PC-3 (cell line): ENCODE measurements at regions of chr7 and their contacts with region 1.

Region 1: DNA sequence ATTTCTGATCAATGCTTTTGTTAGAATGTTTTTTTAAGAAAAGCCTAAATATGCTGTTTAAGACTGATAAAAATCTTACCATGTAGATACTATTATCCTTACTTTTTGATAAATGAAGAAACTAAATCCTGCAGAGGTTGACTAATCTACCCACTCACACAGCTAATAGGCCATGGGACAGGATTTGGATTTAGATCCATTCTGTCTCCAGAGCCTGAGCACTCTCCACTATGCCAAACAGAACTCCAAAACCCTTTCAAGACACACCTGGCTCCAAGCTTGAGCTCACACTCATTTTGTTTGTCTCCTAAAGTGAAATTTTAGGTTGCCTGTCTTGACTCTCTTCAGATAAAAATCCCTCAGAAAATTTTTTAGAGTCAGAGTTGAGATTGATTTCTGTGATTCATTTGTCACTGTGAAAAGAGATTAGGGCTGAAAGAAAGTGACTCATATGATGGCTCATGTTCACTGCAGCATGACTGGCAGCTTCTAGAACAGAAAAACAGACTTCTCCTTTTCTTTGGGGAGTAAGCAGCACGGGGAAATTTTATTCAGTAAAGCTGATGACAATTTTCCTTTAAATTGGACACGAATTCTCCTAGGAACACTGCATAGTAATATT is 132.3 kb upstream of the POT1 start:
- DNase-seq: peak; percentile 78
- ATAC-seq: peak; percentile 80
- H3K4me3 ChIP-seq: peak overlapping the region; percentile 11; the same call in 1 of the 2 replicates
- H3K27ac ChIP-seq: peak overlapping the region; percentile 77
- H3K4me1 ChIP-seq: peaks cover 16% of the 10 kb centered on the region
- H3K27me3 ChIP-seq: no peaks in the 10 kb centered on the region
- CTCF ChIP-seq: no peak

Region 2: GRCh38 chr7:125136755-125137547 is 75.1 kb after region 1 on chr7:
- CTCF ChIA-PET with region 1: no interaction called
- POLR2A ChIA-PET with region 1: no interaction called
- intact Hi-C with region 1: loop called (anchors 1 kb)
- DNase-seq: peak; percentile 61
- ATAC-seq: peak; percentile 84
- H3K4me3 ChIP-seq: peak overlapping the region; percentile 34
- H3K27ac ChIP-seq: peak overlapping the region; percentile 55
- H3K4me1 ChIP-seq: peaks cover 19% of the 10 kb centered on the region; the same call in 1 of the 2 replicates
- H3K27me3 ChIP-seq: no peaks in the 10 kb centered on the region
- CTCF ChIP-seq: no peak

Region 3: GRCh38 chr7:125316466-125316865 is 254.6 kb after region 1 on chr7:
- CTCF ChIA-PET with region 1: interaction called, 18 read pairs
- POLR2A ChIA-PET with region 1: no interaction called
- intact Hi-C with region 1: loop called (anchors 1 kb)
- DNase-seq: peak; percentile 56
- ATAC-seq: peak; percentile 99
- H3K4me3 ChIP-seq: no peak overlapping the region
- H3K27ac ChIP-seq: no peak overlapping the region
- H3K4me1 ChIP-seq: no peaks in the 10 kb centered on the region
- H3K27me3 ChIP-seq: no peaks in the 10 kb centered on the region
- CTCF ChIP-seq: peak; percentile 48

Region 4: DNA sequence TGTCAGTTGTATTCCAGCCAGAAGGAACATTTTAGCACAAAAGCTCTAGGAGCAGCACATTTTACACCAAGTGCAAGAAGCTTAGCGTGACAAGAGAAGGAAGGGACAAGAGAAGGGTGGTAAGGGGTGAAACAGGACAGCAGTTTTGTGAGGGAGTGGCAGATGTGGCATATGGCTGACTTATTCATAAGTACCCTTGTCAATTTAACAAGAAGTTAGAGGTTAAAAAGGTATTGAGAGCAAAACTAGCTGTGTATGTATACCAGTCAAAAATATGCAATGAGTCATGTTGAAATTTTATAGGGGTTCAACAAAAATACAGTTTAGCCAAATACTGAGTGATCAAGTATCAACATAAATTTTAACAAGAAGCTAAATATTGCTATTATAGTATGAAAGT is 429.2 kb after region 1 on chr7:
- CTCF ChIA-PET with region 1: no interaction called
- POLR2A ChIA-PET with region 1: no interaction called
- intact Hi-C with region 1: loop called (anchors 2 kb)
- DNase-seq: peak; percentile 57
- ATAC-seq: peak; percentile 96
- H3K4me3 ChIP-seq: peak overlapping the region; percentile 31; the same call in 1 of the 2 replicates
- H3K27ac ChIP-seq: peak overlapping the region; percentile 87
- H3K4me1 ChIP-seq: peaks cover 24% of the 10 kb centered on the region
- H3K27me3 ChIP-seq: no peaks in the 10 kb centered on the region
- CTCF ChIP-seq: no peak

Region 5: DNA sequence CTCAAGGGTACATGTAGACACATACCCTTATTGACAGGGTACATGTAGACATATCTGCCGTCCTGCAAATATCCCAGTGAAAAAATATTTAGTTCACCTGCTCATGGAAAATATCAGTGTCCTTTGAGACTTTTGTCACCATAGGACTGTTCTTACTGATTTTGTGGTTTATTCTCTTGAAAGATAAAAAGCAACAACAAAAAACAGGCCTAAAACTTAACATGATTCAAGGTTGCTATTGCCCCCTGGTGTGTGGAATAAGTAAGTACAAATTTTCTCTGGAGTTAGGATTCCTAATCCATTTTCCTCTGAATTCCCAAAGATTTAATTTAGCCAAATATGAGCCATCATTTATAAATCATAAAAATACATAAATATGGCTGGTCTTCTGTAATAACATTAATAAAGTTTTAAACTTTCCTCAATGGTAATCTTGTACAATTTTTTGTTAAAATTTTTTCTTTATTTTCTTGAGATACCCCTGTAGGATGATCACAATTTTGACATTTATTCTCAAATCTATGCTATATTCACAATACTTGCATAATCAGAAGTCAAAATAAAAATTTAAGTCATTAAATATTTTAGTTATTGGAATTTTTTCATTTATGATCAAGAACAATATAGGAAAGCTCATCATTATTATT is 609.2 kb after region 1 on chr7:
- CTCF ChIA-PET with region 1: no interaction called
- POLR2A ChIA-PET with region 1: no interaction called
- intact Hi-C with region 1: loop called (anchors 1 kb)
- DNase-seq: peak; percentile 37
- ATAC-seq: peak; percentile 42
- H3K4me3 ChIP-seq: no peak overlapping the region
- H3K27ac ChIP-seq: no peak overlapping the region
- H3K4me1 ChIP-seq: no peaks in the 10 kb centered on the region
- H3K27me3 ChIP-seq: no peaks in the 10 kb centered on the region
- CTCF ChIP-seq: peak; percentile 80